ENCODE measurements at regions of chr4 and their contacts with region 1.

Region 1: GRCh38 chr4:47562297-47562696 is 77.2 kb downstream of the ATP10D start:
- DNase-seq: no peak
- H3K4me3 Mint-ChIP-seq: no peak overlapping the region
- H3K27ac Mint-ChIP-seq: no peak overlapping the region
- H3K4me1 Mint-ChIP-seq: no peaks in the 10 kb centered on the region
- H3K27me3 Mint-ChIP-seq: no peaks in the 10 kb centered on the region
- CTCF ChIP-seq: no peak

Region 2: DNA sequence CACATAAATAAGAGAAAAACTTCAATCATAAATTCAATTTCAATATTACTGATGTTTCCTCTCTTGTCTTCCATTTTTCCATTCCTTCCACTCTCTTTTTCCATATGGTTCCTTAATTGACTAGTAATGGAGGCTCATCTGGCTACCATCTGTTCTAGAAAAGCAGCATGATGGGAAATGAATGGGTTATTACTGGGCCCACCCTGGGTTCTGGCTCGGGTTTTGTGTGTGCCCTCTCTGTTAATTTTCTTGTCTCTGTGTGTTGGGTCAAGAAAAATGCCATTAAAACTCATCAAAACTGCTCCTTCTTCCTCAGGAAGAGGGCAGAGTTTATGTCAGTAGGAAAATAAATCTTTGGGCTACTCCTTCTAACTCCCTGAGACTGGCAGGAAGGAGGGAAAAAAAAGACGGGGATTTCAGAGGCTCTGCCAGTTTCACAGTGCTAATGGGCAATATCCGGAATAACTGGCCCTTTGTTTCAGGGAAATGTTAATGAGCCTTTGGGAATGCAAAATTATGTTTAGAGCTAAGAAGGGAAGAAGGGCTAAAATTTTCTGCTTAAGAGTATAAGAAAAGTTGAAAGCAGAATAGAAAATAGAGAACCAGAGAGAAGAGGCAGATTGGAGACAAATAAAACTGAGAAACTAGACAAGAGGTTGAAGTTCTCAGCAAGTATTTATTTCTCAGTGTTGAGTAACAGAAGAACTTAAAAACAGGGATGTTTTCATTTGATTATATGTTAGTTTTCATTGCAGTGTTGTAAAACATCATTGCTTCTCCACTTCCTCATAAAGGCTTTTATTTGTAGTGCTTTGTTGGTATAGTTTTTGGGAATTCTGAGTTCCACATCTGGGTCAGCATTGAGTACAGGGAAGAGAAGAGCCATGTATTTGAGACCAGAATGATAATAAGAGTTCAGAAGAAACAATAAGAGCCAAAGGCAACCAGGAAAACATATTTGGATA is 511.3 kb before region 1 on chr4:
- CTCF ChIA-PET with region 1: no interaction called
- POLR2A ChIA-PET with region 1: no interaction called
- intact Hi-C with region 1: no loop called
- DNase-seq: no peak
- H3K4me3 Mint-ChIP-seq: no peak overlapping the region
- H3K27ac Mint-ChIP-seq: no peak overlapping the region
- H3K4me1 Mint-ChIP-seq: no peaks in the 10 kb centered on the region
- H3K27me3 Mint-ChIP-seq: peaks cover 90% of the 10 kb centered on the region
- CTCF ChIP-seq: no peak

Region 3: DNA sequence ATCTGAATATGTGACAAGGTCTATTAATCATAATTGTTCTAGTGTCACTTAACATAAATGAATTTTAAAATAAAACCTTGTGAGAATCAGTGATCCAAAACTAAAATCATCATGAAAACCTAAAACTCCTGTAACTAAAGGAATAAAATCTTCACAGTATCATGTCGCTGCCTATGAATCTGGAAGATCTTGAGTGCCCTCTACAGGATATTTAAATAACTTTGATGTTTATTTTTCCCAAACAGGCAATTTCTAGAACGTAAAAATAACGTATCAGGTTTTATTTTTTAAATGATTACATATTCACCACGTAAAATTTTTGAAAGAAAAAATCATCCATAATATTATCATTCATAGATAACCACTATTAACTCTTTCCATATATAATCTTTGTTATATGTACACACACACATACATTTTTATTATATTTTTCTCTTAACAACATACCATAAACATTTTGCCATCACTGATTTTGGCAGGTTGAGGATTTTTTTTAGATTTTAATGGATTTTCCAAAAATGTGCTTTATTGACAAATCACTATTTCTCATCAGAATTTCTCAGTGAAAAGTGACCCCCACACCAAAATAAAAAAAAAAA is 178.4 kb before region 1 on chr4:
- CTCF ChIA-PET with region 1: no interaction called
- POLR2A ChIA-PET with region 1: no interaction called
- intact Hi-C with region 1: loop called (anchors 5 kb)
- DNase-seq: peak; percentile 45
- H3K4me3 Mint-ChIP-seq: no peak overlapping the region
- H3K27ac Mint-ChIP-seq: no peak overlapping the region
- H3K4me1 Mint-ChIP-seq: no peaks in the 10 kb centered on the region
- H3K27me3 Mint-ChIP-seq: peaks cover 39% of the 10 kb centered on the region
- CTCF ChIP-seq: peak; percentile 48

Region 4: GRCh38 chr4:47485047-47485692 is 77.1 kb before region 1 on chr4 and contains the start of gene ATP10D:
- CTCF ChIA-PET with region 1: interaction called, 10 read pairs
- POLR2A ChIA-PET with region 1: interaction called, 13 read pairs
- intact Hi-C with region 1: loop called (anchors 5 kb)
- DNase-seq: peak; percentile 90
- H3K4me3 Mint-ChIP-seq: peak within 1 kb of the TSS; percentile 94
- H3K27ac Mint-ChIP-seq: peak within 1 kb of the TSS; percentile 99
- H3K4me1 Mint-ChIP-seq: peaks cover 6% of the 10 kb centered on the region
- H3K27me3 Mint-ChIP-seq: no peaks in the 10 kb centered on the region
- CTCF ChIP-seq: no peak
- total RNA-seq, gene ATP10D: 16.2 and 16.9 TPM in 2 replicates

Region 5: GRCh38 chr4:47538495-47539154 is 23.7 kb before region 1 on chr4:
- CTCF ChIA-PET with region 1: interaction called, 23 read pairs
- POLR2A ChIA-PET with region 1: no interaction called
- intact Hi-C with region 1: no loop called
- DNase-seq: no peak
- H3K4me3 Mint-ChIP-seq: no peak overlapping the region
- H3K27ac Mint-ChIP-seq: no peak overlapping the region
- H3K4me1 Mint-ChIP-seq: no peaks in the 10 kb centered on the region
- H3K27me3 Mint-ChIP-seq: no peaks in the 10 kb centered on the region
- CTCF ChIP-seq: no peak

Region 6: GRCh38 chr4:47933840-47934239 is 371.5 kb after region 1 on chr4:
- CTCF ChIA-PET with region 1: interaction called, 16 read pairs
- POLR2A ChIA-PET with region 1: no interaction called
- intact Hi-C with region 1: no loop called
- DNase-seq: peak; percentile 51
- H3K4me3 Mint-ChIP-seq: no peak overlapping the region
- H3K27ac Mint-ChIP-seq: no peak overlapping the region
- H3K4me1 Mint-ChIP-seq: peaks cover 20% of the 10 kb centered on the region
- H3K27me3 Mint-ChIP-seq: no peaks in the 10 kb centered on the region
- CTCF ChIP-seq: peak; percentile 44

Region 7: DNA sequence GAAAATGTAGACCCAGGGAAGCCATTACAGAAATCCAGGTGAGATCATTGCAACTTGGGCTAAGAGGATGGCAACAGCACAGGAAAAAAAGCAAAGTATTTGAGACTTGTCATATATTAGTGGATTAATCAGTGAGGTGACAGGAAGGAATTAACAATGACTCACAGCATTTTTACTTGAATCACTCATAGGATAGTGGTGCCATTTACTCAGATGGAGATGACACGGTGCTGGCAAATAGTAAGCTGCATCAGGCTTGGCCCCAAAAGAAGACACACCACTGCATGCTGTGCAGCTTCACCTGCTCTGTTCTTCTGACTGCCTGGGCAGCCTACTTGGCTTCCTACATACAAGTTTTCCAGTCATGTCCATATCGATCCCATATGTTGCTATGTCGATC is 1073.0 kb after region 1 on chr4:
- CTCF ChIA-PET with region 1: no interaction called
- POLR2A ChIA-PET with region 1: no interaction called
- intact Hi-C with region 1: no loop called
- DNase-seq: peak; percentile 4
- H3K4me3 Mint-ChIP-seq: no peak overlapping the region
- H3K27ac Mint-ChIP-seq: no peak overlapping the region
- H3K4me1 Mint-ChIP-seq: peaks cover 11% of the 10 kb centered on the region
- H3K27me3 Mint-ChIP-seq: no peaks in the 10 kb centered on the region
- CTCF ChIP-seq: no peak